HCT116 (cell line): ENCODE measurements at regions of chr12 and their contacts with region 1.

Region 1: DNA sequence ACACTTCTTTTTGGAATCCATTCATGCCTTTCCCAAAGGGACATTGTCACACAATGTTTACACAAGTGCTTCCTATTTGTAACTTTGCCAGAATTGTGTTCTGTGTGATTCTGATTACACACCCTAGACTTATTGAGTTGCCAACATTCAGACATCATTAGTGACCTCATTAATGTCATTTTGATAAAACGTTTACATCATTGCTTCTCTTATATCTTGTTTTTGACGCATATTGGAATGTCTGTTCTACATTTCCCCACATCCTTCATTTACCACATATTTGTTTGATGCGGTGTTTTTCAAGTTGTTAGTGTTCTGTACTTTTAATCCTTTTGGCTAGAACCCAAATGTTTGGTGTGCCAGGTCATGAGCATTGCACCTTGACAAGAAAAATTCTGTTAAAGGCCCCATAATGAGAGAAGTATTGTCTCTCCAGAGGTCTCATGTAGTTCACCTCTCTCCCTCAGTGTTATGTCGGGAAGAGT is 305.5 kb downstream of the AEBP2 start:
- DNase-seq: no peak
- ATAC-seq: no peak
- H3K4me3 ChIP-seq: no peak overlapping the region
- H3K27ac ChIP-seq: no peak overlapping the region
- H3K4me1 ChIP-seq: no peaks in the 10 kb centered on the region
- H3K27me3 ChIP-seq: no peaks in the 10 kb centered on the region; the same call in 1 of the 2 replicates
- CTCF ChIP-seq: no peak
- POLR2A ChIP-seq: no peak
- RAD21 ChIP-seq: no peak

Region 2: GRCh38 chr12:19893514-19893913 is 148.7 kb after region 1 on chr12:
- CTCF ChIA-PET with region 1: no interaction called
- POLR2A ChIA-PET with region 1: no interaction called
- RAD21 ChIA-PET with region 1: no interaction called
- intact Hi-C with region 1: loop called (anchors 5 kb)
- DNase-seq: peak; percentile 8
- ATAC-seq: peak; percentile 70
- H3K4me3 ChIP-seq: no peak overlapping the region
- H3K27ac ChIP-seq: no peak overlapping the region
- H3K4me1 ChIP-seq: no peaks in the 10 kb centered on the region
- H3K27me3 ChIP-seq: no peaks in the 10 kb centered on the region
- CTCF ChIP-seq: peak; percentile 7 to 24 (median 23); a peak in 2 of 6 replicates
- POLR2A ChIP-seq: no peak
- RAD21 ChIP-seq: peak; percentile 54

Region 3: DNA sequence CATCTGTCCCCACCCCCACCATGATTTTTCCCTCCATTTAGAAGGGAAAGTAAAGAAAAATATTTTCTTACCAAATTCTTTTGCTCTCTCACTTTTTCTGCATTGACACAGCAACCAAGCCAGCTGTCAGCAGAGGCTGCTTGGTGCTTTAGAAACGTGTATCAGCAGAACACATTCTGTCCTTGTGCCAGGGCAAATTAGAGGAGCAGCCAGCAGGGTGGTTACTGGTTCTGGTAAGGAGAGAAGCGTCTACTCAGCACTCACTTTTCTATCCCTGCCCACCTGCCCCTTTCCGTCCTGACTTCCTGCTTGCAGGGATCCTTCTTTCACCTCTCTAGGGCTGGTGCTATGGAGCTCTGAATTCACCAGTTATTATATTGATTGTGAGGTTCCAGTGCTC is 296.1 kb after region 1 on chr12:
- CTCF ChIA-PET with region 1: no interaction called
- POLR2A ChIA-PET with region 1: no interaction called
- RAD21 ChIA-PET with region 1: no interaction called
- intact Hi-C with region 1: no loop called
- DNase-seq: no peak
- ATAC-seq: no peak
- H3K4me3 ChIP-seq: no peak overlapping the region
- H3K27ac ChIP-seq: no peak overlapping the region
- H3K4me1 ChIP-seq: no peaks in the 10 kb centered on the region
- H3K27me3 ChIP-seq: no peaks in the 10 kb centered on the region
- CTCF ChIP-seq: no peak
- POLR2A ChIP-seq: no peak
- RAD21 ChIP-seq: no peak